ENCODE measurements at regions of chr4 and their contacts with region 1.

Region 1: GRCh38 chr4:99894161-99894997 is at the start of gene LAMTOR3:
- DNase-seq: peak; percentile 95
- ATAC-seq: peak; percentile 97
- H3K4me3 ChIP-seq: peak within 1 kb of the TSS; percentile 32 to 94 (median 79)
- H3K4me3 Mint-ChIP-seq: peak within 1 kb of the TSS; percentile 98
- H3K27ac ChIP-seq: peak within 1 kb of the TSS; percentile 74 to 97
- H3K27ac Mint-ChIP-seq: peak within 1 kb of the TSS; percentile 95
- H3K4me1 ChIP-seq: peaks cover 14 to 18% of the 10 kb centered on the region in 2 donors
- H3K4me1 Mint-ChIP-seq: peaks cover 32% of the 10 kb centered on the region
- H3K27me3 ChIP-seq: no peaks in the 10 kb centered on the region
- H3K27me3 Mint-ChIP-seq: no peaks in the 10 kb centered on the region
- CTCF ChIP-seq: no peak
- total RNA-seq, gene LAMTOR3: 18.0 and 20.1 TPM in 2 replicates

Region 2: DNA sequence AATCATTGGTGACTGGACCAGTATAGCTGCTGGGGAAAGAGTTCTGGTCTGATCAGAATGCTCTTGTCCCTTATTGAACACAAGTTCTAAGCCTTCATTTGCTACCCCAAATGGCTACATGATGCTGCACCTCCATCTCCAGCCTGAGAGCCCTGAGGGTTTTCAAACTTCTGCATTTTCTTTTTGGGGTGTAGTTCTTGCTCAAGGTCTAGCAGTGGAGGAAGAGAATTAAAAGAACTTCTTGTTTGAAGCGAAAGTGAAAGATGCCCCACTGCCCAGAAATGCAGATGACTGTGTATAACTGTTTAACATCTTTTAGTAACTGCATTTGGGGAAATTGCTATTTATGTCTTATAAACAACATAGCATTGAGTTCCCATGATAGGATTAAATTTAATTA is 38.7 kb before region 1 on chr4:
- CTCF ChIA-PET with region 1: interaction called, 4 read pairs
- POLR2A ChIA-PET with region 1: no interaction called
- intact Hi-C with region 1: loop called (anchors 5 kb)
- DNase-seq: peak; percentile 78
- ATAC-seq: peak; percentile 75
- H3K4me3 ChIP-seq: peak overlapping the region in 1 of 5 experiments; percentile 5
- H3K4me3 Mint-ChIP-seq: peak overlapping the region; percentile 11
- H3K27ac ChIP-seq: peak overlapping the region; percentile 31 to 84
- H3K27ac Mint-ChIP-seq: peak overlapping the region; percentile 64
- H3K4me1 ChIP-seq: peaks cover 46 to 51% of the 10 kb centered on the region in 2 donors
- H3K4me1 Mint-ChIP-seq: peaks cover 69% of the 10 kb centered on the region
- H3K27me3 ChIP-seq: no peaks in the 10 kb centered on the region
- H3K27me3 Mint-ChIP-seq: no peaks in the 10 kb centered on the region
- CTCF ChIP-seq: no peak

Region 3: DNA sequence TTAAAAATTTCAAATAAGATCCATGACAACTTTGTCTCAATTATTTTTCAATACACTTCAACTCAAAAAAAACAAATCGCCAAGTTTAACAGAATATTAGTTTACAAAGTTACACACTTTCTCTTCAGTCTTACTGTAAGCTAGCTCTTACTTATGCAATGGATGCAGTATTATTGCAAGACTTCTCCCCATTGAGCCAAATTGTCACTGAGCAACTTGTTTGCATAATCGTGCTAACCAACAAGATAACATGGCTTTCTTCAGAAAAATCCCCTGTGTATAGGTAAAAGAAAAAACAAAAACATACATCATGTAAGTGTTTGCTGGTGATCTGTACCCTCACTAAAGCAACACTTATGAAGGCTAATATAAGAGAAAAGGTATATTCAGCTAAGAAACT is 33.2 kb after region 1 on chr4:
- CTCF ChIA-PET with region 1: no interaction called
- POLR2A ChIA-PET with region 1: no interaction called
- intact Hi-C with region 1: no loop called
- DNase-seq: no peak
- ATAC-seq: no peak
- H3K4me3 ChIP-seq: no peak overlapping the region
- H3K4me3 Mint-ChIP-seq: no peak overlapping the region
- H3K27ac ChIP-seq: no peak overlapping the region
- H3K27ac Mint-ChIP-seq: no peak overlapping the region
- H3K4me1 ChIP-seq: no peaks in the 10 kb centered on the region
- H3K4me1 Mint-ChIP-seq: peaks cover 14% of the 10 kb centered on the region
- H3K27me3 ChIP-seq: no peaks in the 10 kb centered on the region
- H3K27me3 Mint-ChIP-seq: no peaks in the 10 kb centered on the region
- CTCF ChIP-seq: no peak

Region 4: GRCh38 chr4:100716416-100716815 is 822.0 kb after region 1 on chr4:
- CTCF ChIA-PET with region 1: no interaction called
- POLR2A ChIA-PET with region 1: no interaction called
- intact Hi-C with region 1: no loop called
- DNase-seq: no peak
- ATAC-seq: no peak
- H3K4me3 ChIP-seq: no peak overlapping the region
- H3K4me3 Mint-ChIP-seq: no peak overlapping the region
- H3K27ac ChIP-seq: no peak overlapping the region
- H3K27ac Mint-ChIP-seq: no peak overlapping the region
- H3K4me1 ChIP-seq: no peaks in the 10 kb centered on the region
- H3K4me1 Mint-ChIP-seq: no peaks in the 10 kb centered on the region
- H3K27me3 ChIP-seq: no peaks in the 10 kb centered on the region
- H3K27me3 Mint-ChIP-seq: peaks cover 14% of the 10 kb centered on the region
- CTCF ChIP-seq: no peak